Heart right ventricle (tissue), 16 donors: ENCODE measurements at regions of chr19 and their contacts with region 1.

Region 1: DNA sequence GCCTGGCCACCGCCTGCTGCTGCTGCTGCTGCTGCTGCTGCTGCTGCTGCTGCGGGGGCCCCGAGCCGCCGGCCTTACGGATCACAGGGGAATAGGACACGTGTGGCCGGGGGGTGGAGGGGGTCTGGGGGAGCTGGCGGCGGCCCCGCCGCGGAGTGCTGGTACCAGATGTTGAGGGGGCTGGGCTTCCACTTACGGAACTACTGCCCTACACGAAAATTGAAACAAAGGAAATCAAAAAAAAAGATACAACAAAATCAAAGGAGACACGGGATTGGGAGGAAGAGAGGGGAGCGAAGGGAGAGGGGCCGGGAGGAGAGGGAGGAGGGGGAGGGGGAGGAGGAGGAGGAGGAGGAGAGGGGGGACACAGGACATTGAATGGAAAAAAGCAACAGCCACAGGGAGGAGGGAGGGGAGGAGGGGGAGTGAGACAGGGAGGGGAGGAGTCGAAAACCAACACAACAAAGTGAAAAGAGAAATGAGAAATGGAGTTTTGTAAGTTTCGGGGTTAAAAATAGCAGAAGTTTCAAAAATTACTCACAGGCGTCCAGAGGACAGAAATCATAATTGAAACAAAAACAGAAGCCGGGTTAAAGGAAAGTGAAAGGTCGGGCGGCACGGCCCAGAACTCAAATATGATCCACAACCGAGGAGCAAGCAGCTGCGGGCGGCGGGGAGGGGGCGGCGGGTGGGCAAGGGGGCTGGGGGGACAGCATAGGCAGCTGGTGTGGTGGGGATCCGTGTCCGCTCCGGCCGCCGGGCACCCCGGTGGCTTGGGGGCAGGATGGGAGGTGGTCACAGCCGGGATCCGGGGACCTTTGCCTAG is 57.8 kb downstream of the IER2 start:
- DNase-seq: peak; percentile 56 to 80
- ATAC-seq: peak; percentile 6 to 67 (median 46)
- H3K4me3 ChIP-seq: peak overlapping the region in 9 of 10 donors; percentile 30 to 65 (median 54)
- H3K27ac ChIP-seq: peak overlapping the region; percentile 46 to 95 (median 85)
- H3K4me1 ChIP-seq: peaks cover 0 to 8% (median 0%) of the 10 kb centered on the region in 9 donors
- H3K27me3 ChIP-seq: peaks cover 0 to 11% (median 0%) of the 10 kb centered on the region in 7 donors
- CTCF ChIP-seq: no peak

Region 2: GRCh38 chr19:13002166-13002898 is 205.7 kb before region 1 on chr19:
- intact Hi-C with region 1: no loop called
- DNase-seq: peak; percentile 66 to 82
- ATAC-seq: peak; percentile 68 to 83 (median 74)
- H3K4me3 ChIP-seq: peak overlapping the region in 9 of 10 donors; percentile 7 to 47 (median 40)
- H3K27ac ChIP-seq: peak overlapping the region; percentile 83 to 96 (median 92)
- H3K4me1 ChIP-seq: peaks cover 18 to 79% (median 50%) of the 10 kb centered on the region in 9 donors
- H3K27me3 ChIP-seq: no peaks in the 10 kb centered on the region
- CTCF ChIP-seq: peak in 4 of 9 donors; percentile 32 to 52 (median 48)

Region 3: DNA sequence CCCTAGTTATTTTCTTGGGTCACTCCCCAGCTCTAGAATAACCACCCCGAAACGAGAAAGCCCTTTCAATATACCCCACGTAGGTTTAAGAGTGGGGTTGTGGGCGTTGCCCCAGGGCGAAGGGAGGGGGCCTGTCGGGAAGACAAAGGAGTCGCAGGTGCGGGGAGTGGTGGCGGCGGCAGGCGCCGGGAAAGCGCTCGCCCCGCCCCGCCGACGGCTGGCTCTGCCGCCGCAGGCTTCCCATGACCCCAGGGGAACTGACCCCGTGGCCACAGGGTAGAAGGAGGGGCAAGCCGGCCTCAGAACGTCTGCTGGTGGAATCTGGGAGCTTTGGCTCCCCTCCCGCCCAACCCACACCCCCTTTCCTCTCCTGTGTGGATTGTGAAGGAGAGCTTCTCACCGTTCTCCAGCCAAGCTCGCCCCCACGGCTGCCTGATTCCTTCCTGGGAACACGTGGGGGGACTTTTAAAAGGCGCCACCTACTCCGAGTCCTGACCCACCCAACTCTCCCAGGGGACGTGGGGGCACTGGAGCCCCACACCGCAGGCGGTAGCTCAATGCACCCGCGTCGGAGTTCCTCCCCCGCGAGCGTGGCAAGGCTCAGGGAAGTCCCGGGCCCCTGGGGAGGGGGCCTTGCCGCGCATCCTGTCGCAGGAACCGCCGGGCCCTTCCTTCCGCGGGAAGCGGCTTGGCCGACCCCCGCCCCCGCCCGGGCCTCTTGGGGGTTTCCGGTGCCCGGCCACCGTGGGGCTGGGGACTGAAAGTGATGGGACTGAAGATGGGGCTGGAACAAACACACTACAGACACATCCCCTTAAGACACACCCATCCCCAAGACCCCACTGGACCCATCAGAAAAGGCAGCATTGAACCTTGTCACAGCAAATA is 52.3 kb before region 1 on chr19:
- intact Hi-C with region 1: loop called in 2 of 10 experiments (anchors 5 kb)
- DNase-seq: peak; percentile 86 to 91
- ATAC-seq: peak in 7 of 8 donors; percentile 5 to 29 (median 10)
- H3K4me3 ChIP-seq: peak overlapping the region; percentile 64 to 100 (median 88)
- H3K27ac ChIP-seq: peak overlapping the region; percentile 86 to 100 (median 98)
- H3K4me1 ChIP-seq: peaks cover 0 to 43% (median 25%) of the 10 kb centered on the region in 9 donors
- H3K27me3 ChIP-seq: no peaks in the 10 kb centered on the region
- CTCF ChIP-seq: no peak